Caco-2 (cell line): ENCODE measurements at regions of chr16 and their contacts with region 1.

Region 1: GRCh38 chr16:47141773-47142485 is 1.8 kb downstream of the NETO2 start:
- DNase-seq: peak; percentile 87 to 88
- H3K4me3 ChIP-seq: peak overlapping the region; percentile 79
- H3K4me3 Mint-ChIP-seq: peak overlapping the region; percentile 79
- H3K27ac Mint-ChIP-seq: no peak overlapping the region
- H3K4me1 ChIP-seq: no peaks in the 10 kb centered on the region
- H3K4me1 Mint-ChIP-seq: peaks cover 22% of the 10 kb centered on the region
- H3K27me3 ChIP-seq: no peaks in the 10 kb centered on the region
- H3K27me3 Mint-ChIP-seq: no peaks in the 10 kb centered on the region
- CTCF ChIP-seq: peak; percentile 73 to 96

Region 2: GRCh38 chr16:46853713-46854443 is 288.1 kb before region 1 on chr16:
- CTCF ChIA-PET with region 1: no interaction called
- POLR2A ChIA-PET with region 1: no interaction called
- intact Hi-C with region 1: loop called (anchors 5 kb)
- DNase-seq: peak; percentile 85 to 86
- H3K4me3 ChIP-seq: no peak overlapping the region
- H3K4me3 Mint-ChIP-seq: no peak overlapping the region
- H3K27ac Mint-ChIP-seq: no peak overlapping the region
- H3K4me1 ChIP-seq: peaks cover 49% of the 10 kb centered on the region
- H3K4me1 Mint-ChIP-seq: peaks cover 50% of the 10 kb centered on the region
- H3K27me3 ChIP-seq: no peaks in the 10 kb centered on the region
- H3K27me3 Mint-ChIP-seq: no peaks in the 10 kb centered on the region
- CTCF ChIP-seq: peak; percentile 83 to 87

Region 3: DNA sequence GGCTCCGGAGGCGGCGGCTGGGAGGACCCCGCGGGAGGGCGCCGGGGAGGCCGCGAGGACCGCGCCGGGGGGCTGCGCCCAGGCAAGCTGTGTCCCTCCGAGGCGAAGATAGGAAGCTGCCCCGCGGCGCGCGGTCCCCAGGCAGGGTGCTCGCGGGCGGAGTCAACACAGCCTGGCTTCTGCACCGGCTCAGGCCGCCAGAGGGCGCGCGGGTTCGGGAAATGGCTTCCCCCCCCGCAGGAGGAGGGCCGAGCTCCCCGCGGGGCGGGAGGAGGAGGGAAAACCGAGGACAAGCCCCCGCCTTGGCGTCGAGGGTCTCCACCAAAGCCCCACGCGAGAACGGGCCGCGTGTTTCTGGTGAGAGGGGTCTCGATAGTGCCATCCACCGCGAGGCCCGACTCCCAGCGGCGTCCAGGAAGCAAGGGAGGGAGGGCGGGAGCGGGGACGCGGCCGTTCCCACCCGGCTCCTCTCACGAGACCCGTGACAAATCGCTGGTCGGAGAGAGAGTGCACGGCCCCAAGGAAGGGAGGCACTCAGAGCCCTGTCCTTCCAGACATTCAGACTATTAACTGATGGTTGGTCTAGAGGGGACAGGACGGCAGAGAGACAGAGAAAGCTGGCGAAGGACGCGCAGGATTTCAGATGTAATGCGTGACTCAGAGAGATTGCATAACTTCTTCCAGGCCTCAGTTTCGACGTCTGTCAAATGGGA is 104.0 kb before region 1 on chr16:
- CTCF ChIA-PET with region 1: interaction called, 13 read pairs
- POLR2A ChIA-PET with region 1: no interaction called
- intact Hi-C with region 1: loop called (anchors 1 kb)
- DNase-seq: peak; percentile 84 to 93
- H3K4me3 ChIP-seq: peak overlapping the region; percentile 69
- H3K4me3 Mint-ChIP-seq: peak overlapping the region; percentile 75
- H3K27ac Mint-ChIP-seq: no peak overlapping the region
- H3K4me1 ChIP-seq: no peaks in the 10 kb centered on the region
- H3K4me1 Mint-ChIP-seq: no peaks in the 10 kb centered on the region
- H3K27me3 ChIP-seq: no peaks in the 10 kb centered on the region
- H3K27me3 Mint-ChIP-seq: peaks cover 2% of the 10 kb centered on the region
- CTCF ChIP-seq: peak; percentile 87 to 92

Region 4: GRCh38 chr16:47523342-47524006 is 381.5 kb after region 1 on chr16:
- CTCF ChIA-PET with region 1: no interaction called
- POLR2A ChIA-PET with region 1: no interaction called
- intact Hi-C with region 1: loop called (anchors 5 kb)
- DNase-seq: peak in 1 of 2 experiments; percentile 13
- H3K4me3 ChIP-seq: no peak overlapping the region
- H3K4me3 Mint-ChIP-seq: no peak overlapping the region
- H3K27ac Mint-ChIP-seq: no peak overlapping the region
- H3K4me1 ChIP-seq: peaks cover 8% of the 10 kb centered on the region
- H3K4me1 Mint-ChIP-seq: no peaks in the 10 kb centered on the region
- H3K27me3 ChIP-seq: no peaks in the 10 kb centered on the region
- H3K27me3 Mint-ChIP-seq: no peaks in the 10 kb centered on the region
- CTCF ChIP-seq: no peak

Region 5: GRCh38 chr16:47753659-47754058 is 611.7 kb after region 1 on chr16:
- CTCF ChIA-PET with region 1: no interaction called
- POLR2A ChIA-PET with region 1: no interaction called
- intact Hi-C with region 1: no loop called
- DNase-seq: no peak
- H3K4me3 ChIP-seq: no peak overlapping the region
- H3K4me3 Mint-ChIP-seq: no peak overlapping the region
- H3K27ac Mint-ChIP-seq: no peak overlapping the region
- H3K4me1 ChIP-seq: no peaks in the 10 kb centered on the region
- H3K4me1 Mint-ChIP-seq: no peaks in the 10 kb centered on the region
- H3K27me3 ChIP-seq: no peaks in the 10 kb centered on the region; the same call in 1 of the 2 replicates
- H3K27me3 Mint-ChIP-seq: no peaks in the 10 kb centered on the region
- CTCF ChIP-seq: no peak

Region 6: DNA sequence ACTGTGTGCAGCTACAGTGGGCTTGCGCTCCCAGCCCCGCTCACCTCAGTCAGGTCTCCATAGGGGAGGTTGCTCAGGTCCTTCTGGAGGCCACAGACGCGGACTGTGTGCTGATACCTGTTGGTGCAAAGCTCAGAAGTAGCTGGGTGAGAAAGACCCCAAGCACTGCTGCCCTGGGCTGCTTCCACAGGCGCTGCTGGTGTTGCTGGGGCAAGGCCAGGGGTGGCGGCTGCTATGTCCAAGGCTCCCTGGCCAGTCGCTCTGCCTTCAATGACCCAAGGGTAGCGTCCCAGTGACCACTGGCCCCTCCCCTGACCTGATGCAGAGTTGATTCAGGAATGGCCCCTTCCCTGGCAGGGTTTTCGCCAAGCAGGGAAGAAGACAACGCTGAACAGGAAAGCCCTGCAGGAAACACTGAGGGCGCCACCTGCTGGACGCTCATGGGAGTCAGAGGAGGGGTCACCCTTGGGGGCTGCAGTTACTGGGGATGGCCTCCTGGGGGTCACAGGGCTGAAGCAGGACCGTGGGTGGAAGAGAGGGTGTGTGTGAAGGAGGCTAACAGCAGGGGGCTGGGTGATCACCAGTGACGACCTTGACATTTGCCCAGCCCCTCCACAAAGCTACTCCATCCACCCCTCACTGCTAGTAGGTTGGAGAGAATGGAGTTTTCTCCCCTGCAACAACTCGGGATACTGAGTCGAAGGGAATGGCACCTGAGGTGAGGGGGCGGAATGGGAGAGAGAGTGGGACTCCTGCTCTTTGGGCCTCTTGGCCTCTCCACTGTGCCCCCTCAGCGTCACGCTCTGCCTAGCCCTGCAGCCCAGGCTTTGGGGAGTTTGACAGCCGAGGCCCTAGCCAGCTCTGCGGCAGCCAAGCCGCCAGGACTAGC is 975.5 kb after region 1 on chr16:
- CTCF ChIA-PET with region 1: no interaction called
- POLR2A ChIA-PET with region 1: no interaction called
- intact Hi-C with region 1: loop called (anchors 5 kb)
- DNase-seq: peak; percentile 78 to 81
- H3K4me3 ChIP-seq: no peak overlapping the region
- H3K4me3 Mint-ChIP-seq: no peak overlapping the region
- H3K27ac Mint-ChIP-seq: no peak overlapping the region
- H3K4me1 ChIP-seq: no peaks in the 10 kb centered on the region
- H3K4me1 Mint-ChIP-seq: no peaks in the 10 kb centered on the region
- H3K27me3 ChIP-seq: no peaks in the 10 kb centered on the region
- H3K27me3 Mint-ChIP-seq: no peaks in the 10 kb centered on the region
- CTCF ChIP-seq: peak; percentile 90 to 94

Region 7: GRCh38 chr16:48164907-48165726 is 1023.2 kb after region 1 on chr16:
- CTCF ChIA-PET with region 1: interaction called, 15 read pairs
- POLR2A ChIA-PET with region 1: interaction called, 6 read pairs
- intact Hi-C with region 1: no loop called
- DNase-seq: peak; percentile 78 to 86
- H3K4me3 ChIP-seq: peak overlapping the region; percentile 5; the same call in 1 of the 2 replicates
- H3K4me3 Mint-ChIP-seq: peak overlapping the region; percentile 68
- H3K27ac Mint-ChIP-seq: peak overlapping the region; percentile 81
- H3K4me1 ChIP-seq: peaks cover 12% of the 10 kb centered on the region
- H3K4me1 Mint-ChIP-seq: peaks cover 16% of the 10 kb centered on the region
- H3K27me3 ChIP-seq: no peaks in the 10 kb centered on the region
- H3K27me3 Mint-ChIP-seq: no peaks in the 10 kb centered on the region
- CTCF ChIP-seq: peak; percentile 82 to 91